Calu3 (cell line): ENCODE measurements at regions of chr20 and their contacts with region 1.

Region 1: GRCh38 chr20:45963059-45964005 is 8.7 kb downstream of the ZNF335 start:
- DNase-seq: peak; percentile 34
- H3K4me3 Mint-ChIP-seq: no peak overlapping the region
- H3K27ac Mint-ChIP-seq: no peak overlapping the region
- H3K4me1 Mint-ChIP-seq: no peaks in the 10 kb centered on the region
- H3K27me3 Mint-ChIP-seq: no peaks in the 10 kb centered on the region
- CTCF ChIP-seq: peak; percentile 58

Region 2: GRCh38 chr20:45779011-45779915 is 184.1 kb before region 1 on chr20:
- CTCF ChIA-PET with region 1: no interaction called
- intact Hi-C with region 1: no loop called
- DNase-seq: peak; percentile 95
- H3K4me3 Mint-ChIP-seq: peak overlapping the region; percentile 40
- H3K27ac Mint-ChIP-seq: peak overlapping the region; percentile 82
- H3K4me1 Mint-ChIP-seq: peaks cover 70% of the 10 kb centered on the region
- H3K27me3 Mint-ChIP-seq: peaks cover 4% of the 10 kb centered on the region
- CTCF ChIP-seq: no peak

Region 3: DNA sequence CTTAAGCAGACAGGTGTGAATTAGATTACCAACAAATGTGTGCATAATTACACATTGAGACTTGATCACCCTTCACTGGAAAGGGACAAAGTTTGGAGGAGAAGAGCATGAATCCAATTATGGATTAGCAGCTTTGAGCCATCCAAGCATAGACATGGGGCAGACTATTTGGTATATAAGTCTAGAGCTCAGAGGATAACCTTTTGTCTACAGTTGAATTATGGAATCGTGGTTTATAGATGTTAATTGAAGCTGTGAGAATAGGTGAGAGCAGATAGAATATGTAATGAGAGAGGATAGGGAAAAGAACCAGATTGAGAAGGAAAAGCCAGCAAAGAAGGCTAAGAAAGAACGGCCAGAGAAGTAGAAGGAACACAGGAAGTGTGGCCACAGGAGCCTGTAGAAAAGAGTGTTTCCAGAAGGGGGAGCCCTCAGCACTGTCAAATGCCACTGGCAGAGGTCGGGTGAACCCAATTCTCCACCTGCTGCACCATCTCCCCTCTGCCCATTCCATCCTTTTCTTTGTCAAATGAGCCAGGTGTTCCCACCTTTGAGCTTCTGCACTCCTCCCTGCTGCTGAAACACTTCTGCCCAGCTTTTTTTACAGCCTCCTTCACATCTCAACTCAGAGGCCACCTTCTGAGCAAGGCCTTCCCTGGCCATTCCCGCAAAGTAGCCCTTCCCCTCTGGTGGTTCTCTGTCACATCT is 164.2 kb before region 1 on chr20:
- CTCF ChIA-PET with region 1: no interaction called
- intact Hi-C with region 1: loop called (anchors 2 kb)
- DNase-seq: peak; percentile 85
- H3K4me3 Mint-ChIP-seq: no peak overlapping the region
- H3K27ac Mint-ChIP-seq: no peak overlapping the region
- H3K4me1 Mint-ChIP-seq: peaks cover 13% of the 10 kb centered on the region
- H3K27me3 Mint-ChIP-seq: no peaks in the 10 kb centered on the region
- CTCF ChIP-seq: peak; percentile 94

Region 4: GRCh38 chr20:46031701-46032254 is 68.4 kb after region 1 on chr20:
- CTCF ChIA-PET with region 1: no interaction called
- intact Hi-C with region 1: no loop called
- DNase-seq: no peak
- H3K4me3 Mint-ChIP-seq: no peak overlapping the region
- H3K27ac Mint-ChIP-seq: no peak overlapping the region
- H3K4me1 Mint-ChIP-seq: no peaks in the 10 kb centered on the region
- H3K27me3 Mint-ChIP-seq: peaks cover 53% of the 10 kb centered on the region
- CTCF ChIP-seq: no peak